ENCODE measurements at regions of chr13 and their contacts with region 1.

Region 1: GRCh38 chr13:110915057-110915873 is at the start of gene ANKRD10:
- DNase-seq: peak; percentile 98
- H3K4me3 Mint-ChIP-seq: peak within 1 kb of the TSS; percentile 92
- H3K27ac Mint-ChIP-seq: peak within 1 kb of the TSS; percentile 98
- H3K4me1 Mint-ChIP-seq: peaks cover 36% of the 10 kb centered on the region
- H3K27me3 Mint-ChIP-seq: no peaks in the 10 kb centered on the region
- total RNA-seq, gene ANKRD10: 145 and 147 TPM in 2 replicates

Region 2: DNA sequence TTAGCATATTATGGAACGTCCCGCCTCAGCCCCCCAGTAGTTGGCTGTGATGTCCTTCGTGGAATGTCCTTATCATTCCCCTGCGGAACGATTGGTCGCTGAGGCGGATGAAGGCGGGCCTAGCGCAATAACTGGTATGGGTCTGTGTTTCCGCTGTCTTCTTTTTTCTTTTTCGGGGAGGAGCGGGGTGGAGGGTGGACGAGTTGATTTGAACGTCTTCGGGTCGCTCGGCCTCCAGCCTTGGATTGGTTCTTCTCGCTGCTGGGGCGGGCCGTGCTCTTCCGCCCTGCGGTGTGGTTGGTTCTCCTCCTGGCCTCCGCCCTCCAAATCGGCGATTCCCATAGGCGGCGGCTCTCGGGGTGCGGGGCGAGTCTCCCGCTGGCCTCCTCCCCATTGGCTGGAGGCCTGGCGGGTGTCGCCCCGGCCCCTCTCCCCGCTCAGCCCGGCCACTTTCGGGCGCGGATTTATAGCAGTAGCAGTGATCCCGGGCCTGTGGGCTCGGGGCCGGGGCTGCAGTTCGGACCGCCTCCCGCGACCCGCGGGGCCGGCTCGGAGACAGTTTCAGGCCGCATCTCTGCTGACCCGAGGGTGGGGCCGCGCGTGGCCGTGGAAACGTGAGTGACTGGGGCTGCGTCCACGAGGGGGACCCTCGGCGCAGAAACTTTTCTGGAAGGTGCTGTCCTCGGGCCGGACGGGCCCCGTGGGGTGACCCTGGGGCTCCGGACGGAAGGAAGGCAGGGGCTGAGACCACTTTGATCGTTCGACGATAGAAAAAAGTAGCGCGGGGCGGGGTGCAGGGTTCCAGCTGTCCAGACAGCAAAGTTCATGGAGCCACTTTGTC is 199.7 kb before region 1 on chr13:
- intact Hi-C with region 1: loop called (anchors 1 kb)
- DNase-seq: peak; percentile 98
- H3K4me3 Mint-ChIP-seq: peak overlapping the region; percentile 96
- H3K27ac Mint-ChIP-seq: peak overlapping the region; percentile 95
- H3K4me1 Mint-ChIP-seq: peaks cover 29% of the 10 kb centered on the region
- H3K27me3 Mint-ChIP-seq: peaks cover 2% of the 10 kb centered on the region

Region 3: GRCh38 chr13:110965038-110965754 is 49.9 kb after region 1 on chr13:
- intact Hi-C with region 1: loop called (anchors 1 kb)
- DNase-seq: peak; percentile 82
- H3K4me3 Mint-ChIP-seq: peak overlapping the region; percentile 19
- H3K27ac Mint-ChIP-seq: peak overlapping the region; percentile 86
- H3K4me1 Mint-ChIP-seq: peaks cover 27% of the 10 kb centered on the region
- H3K27me3 Mint-ChIP-seq: no peaks in the 10 kb centered on the region

Region 4: GRCh38 chr13:111153279-111153976 is 238.2 kb after region 1 on chr13:
- intact Hi-C with region 1: loop called (anchors 1 kb)
- DNase-seq: peak; percentile 99
- H3K4me3 Mint-ChIP-seq: peak overlapping the region; percentile 90
- H3K27ac Mint-ChIP-seq: peak overlapping the region; percentile 97
- H3K4me1 Mint-ChIP-seq: peaks cover 22% of the 10 kb centered on the region
- H3K27me3 Mint-ChIP-seq: peaks cover 29% of the 10 kb centered on the region

Region 5: DNA sequence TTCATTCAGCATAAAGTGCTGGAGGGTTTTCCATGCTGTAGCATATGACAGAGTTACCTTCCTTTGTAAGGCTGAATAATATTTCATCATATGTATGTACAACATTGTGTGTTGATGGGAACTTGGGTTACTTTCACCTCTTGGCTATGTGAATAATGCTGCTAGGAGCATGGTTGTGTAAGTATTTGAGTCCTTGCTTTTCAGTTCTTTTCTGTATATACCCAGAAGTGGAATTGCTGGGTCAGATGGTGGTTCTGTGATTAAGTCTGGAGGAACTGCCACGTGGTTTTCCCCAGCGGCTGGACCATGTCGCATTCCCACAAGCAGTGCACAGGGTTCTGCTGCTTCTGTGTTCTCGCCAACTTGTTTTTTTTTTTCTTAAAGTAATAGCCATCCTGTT is 304.0 kb after region 1 on chr13:
- intact Hi-C with region 1: loop called (anchors 5 kb)
- DNase-seq: no peak
- H3K4me3 Mint-ChIP-seq: no peak overlapping the region
- H3K27ac Mint-ChIP-seq: no peak overlapping the region
- H3K4me1 Mint-ChIP-seq: peaks cover 14% of the 10 kb centered on the region
- H3K27me3 Mint-ChIP-seq: no peaks in the 10 kb centered on the region